ENCODE measurements at regions of chr15 and their contacts with region 1.

Region 1: DNA sequence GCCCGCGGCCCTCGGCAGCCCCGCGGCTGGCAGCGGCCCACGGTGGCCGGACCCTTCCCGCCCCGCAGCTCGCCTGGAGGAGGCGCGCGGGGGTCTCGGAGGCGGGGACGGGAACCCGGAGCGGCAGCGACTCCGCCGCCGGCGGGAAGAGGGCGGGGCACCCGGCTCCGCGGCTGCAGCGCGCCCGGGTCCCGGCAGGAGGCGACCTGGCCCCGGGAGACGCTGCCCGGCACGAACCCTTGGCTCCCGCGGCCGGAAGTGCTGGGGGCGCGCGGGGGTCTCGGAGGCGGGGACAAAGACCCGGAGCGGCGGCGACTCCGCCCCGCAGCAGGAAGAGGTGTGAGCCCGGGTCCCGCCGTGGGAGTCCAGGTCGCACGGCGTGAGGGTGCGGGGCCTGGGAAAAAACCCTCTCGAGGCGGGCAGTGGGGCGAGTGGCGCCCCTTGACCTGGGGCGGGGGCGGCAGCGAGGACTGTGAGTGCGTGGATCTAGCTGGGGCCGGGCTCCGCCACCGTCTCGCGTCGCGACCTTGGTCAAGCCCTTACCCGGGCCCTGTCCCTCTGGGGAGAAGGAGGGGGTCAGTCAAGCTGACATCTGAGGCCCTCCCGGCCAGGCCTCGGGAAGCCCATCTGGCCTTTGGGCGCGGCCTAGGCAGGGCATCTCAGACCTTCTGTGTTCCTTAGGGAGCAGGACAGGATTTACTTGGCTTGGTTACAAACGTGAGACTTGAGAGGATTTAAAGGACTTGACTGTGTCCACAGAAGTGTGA is at the start of gene CIB2:
- DNase-seq: peak; percentile 93
- ATAC-seq: peak; percentile 87
- H3K4me3 Mint-ChIP-seq: peak within 1 kb of the TSS; percentile 87
- H3K27ac Mint-ChIP-seq: peak within 1 kb of the TSS; percentile 80
- H3K4me1 Mint-ChIP-seq: peaks cover 18% of the 10 kb centered on the region
- H3K27me3 Mint-ChIP-seq: peaks cover 3% of the 10 kb centered on the region
- total RNA-seq, gene CIB2: 0.88 to 1.5 TPM

Region 2: GRCh38 chr15:78149068-78149804 is 17.8 kb after region 1 on chr15 and contains the start of gene IDH3A:
- POLR2A ChIA-PET with region 1: interaction called, 16 read pairs
- DNase-seq: peak; percentile 100
- ATAC-seq: peak; percentile 95
- H3K4me3 Mint-ChIP-seq: peak within 1 kb of the TSS; percentile 96
- H3K27ac Mint-ChIP-seq: peak within 1 kb of the TSS; percentile 85
- H3K4me1 Mint-ChIP-seq: peaks cover 38% of the 10 kb centered on the region
- H3K27me3 Mint-ChIP-seq: no peaks in the 10 kb centered on the region
- total RNA-seq, gene IDH3A: 54.5 to 82.8 TPM